ENCODE measurements at regions of chr19 and their contacts with region 1.

Region 1: DNA sequence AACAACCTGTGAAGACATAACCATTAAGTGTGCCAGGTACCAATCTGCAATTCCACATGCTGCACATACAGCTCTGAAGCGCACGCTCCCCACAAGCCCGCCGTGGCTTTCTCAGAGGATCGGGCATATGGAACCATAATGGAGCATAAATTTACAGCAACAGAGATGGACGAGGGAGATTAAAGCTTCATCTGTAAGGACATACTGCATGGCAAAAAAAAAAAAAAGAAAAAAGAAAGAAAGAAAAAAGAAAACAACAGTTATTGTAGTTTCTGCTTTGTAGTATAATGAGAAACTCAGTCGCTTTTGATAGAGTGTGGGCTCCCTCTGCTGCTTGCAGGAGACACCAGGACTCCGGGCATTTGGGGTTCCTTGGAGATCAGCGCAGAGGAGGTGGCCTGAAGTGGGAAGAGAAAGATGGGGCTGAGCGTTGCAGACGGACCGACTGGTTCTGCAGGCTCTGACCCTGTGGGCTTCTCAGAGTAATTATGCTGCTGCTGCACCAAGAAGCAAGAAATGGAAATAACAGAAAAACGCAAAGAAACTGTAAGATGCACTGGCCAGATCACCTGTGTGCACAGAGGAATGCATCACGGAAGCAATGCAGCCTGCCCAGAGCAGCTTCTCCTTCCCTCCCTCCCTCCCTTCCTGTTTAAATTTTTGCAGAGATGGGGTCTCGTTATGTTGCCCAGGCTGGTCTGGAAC is 10.8 kb upstream of the PDCD5 start:
- DNase-seq: peak; percentile 5 to 15
- ATAC-seq: no peak
- H3K4me3 ChIP-seq: no peak overlapping the region
- H3K27ac ChIP-seq: no peak overlapping the region
- H3K4me1 ChIP-seq: no peaks in the 10 kb centered on the region
- H3K27me3 ChIP-seq: peaks cover 6 to 8% (median 8%) of the 10 kb centered on the region in 3 donors
- CTCF ChIP-seq: peak in 4 of 5 experiments; percentile 25 to 43 (median 35)
- POLR2A ChIP-seq: no peak

Region 2: DNA sequence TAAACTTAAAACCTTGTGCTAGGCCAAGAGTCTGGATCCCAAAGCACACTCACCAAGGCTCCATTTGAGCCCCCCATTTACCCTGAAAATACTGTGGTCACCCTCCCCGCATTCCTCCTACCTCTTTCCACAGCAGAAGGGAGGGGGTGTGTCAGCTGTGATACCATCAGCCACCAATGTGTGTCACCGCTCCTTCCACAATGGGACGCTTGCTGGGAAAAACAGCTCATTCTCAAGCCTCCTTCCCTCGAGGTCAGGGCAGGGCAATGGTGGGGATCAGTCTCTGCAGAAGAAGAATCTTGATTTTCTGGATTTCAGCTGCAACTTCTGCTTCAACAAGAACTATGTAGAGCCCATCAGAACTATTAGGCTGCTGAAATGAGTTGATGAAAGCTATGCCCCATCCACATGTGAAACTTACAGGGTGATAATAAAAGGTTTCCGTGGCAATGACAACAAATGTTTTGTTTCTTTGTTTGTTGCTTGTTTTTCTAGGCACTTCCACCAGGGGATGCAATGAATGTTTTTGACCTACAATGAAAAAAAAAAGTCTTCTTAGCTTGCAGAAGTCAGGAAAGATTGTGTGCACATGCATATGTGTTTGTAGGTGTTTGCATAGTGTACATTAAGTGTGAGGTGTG is 251.2 kb before region 1 on chr19:
- in situ Hi-C with region 1: loop called in 3 of 4 experiments (anchors 25 kb)
- intact Hi-C with region 1: no loop called
- DNase-seq: no peak
- ATAC-seq: no peak
- H3K4me3 ChIP-seq: no peak overlapping the region
- H3K27ac ChIP-seq: no peak overlapping the region
- H3K4me1 ChIP-seq: no peaks in the 10 kb centered on the region
- H3K27me3 ChIP-seq: no peaks in the 10 kb centered on the region
- CTCF ChIP-seq: no peak
- POLR2A ChIP-seq: no peak

Region 3: GRCh38 chr19:32339988-32340874 is 230.0 kb before region 1 on chr19:
- in situ Hi-C with region 1: loop called in 1 of 4 experiments (anchors 10 kb)
- intact Hi-C with region 1: no loop called
- DNase-seq: peak in 1 of 2 donors; percentile 48
- ATAC-seq: peak; percentile 46 to 79
- H3K4me3 ChIP-seq: no peak overlapping the region
- H3K27ac ChIP-seq: no peak overlapping the region
- H3K4me1 ChIP-seq: no peaks in the 10 kb centered on the region
- H3K27me3 ChIP-seq: no peaks in the 10 kb centered on the region
- CTCF ChIP-seq: peak; percentile 36 to 73 (median 60)
- POLR2A ChIP-seq: no peak

Region 4: GRCh38 chr19:32437096-32437495 is 133.1 kb before region 1 on chr19:
- in situ Hi-C with region 1: no loop called
- intact Hi-C with region 1: no loop called
- DNase-seq: no peak
- ATAC-seq: no peak
- H3K4me3 ChIP-seq: no peak overlapping the region
- H3K27ac ChIP-seq: no peak overlapping the region
- H3K4me1 ChIP-seq: no peaks in the 10 kb centered on the region
- H3K27me3 ChIP-seq: no peaks in the 10 kb centered on the region
- CTCF ChIP-seq: no peak
- POLR2A ChIP-seq: no peak